Ovary (tissue), 10 donors: ENCODE measurements at regions of chr11 and their contacts with region 1.

Region 1: GRCh38 chr11:105802390-105802789 is 192.5 kb downstream of the GRIA4 start:
- DNase-seq: no peak
- H3K4me3 ChIP-seq: no peak overlapping the region
- H3K27ac ChIP-seq: no peak overlapping the region
- H3K4me1 ChIP-seq: no peaks in the 10 kb centered on the region
- H3K27me3 ChIP-seq: no peaks in the 10 kb centered on the region
- CTCF ChIP-seq: no peak
- EP300 ChIP-seq: no peak
- POLR2A ChIP-seq: no peak

Region 2: DNA sequence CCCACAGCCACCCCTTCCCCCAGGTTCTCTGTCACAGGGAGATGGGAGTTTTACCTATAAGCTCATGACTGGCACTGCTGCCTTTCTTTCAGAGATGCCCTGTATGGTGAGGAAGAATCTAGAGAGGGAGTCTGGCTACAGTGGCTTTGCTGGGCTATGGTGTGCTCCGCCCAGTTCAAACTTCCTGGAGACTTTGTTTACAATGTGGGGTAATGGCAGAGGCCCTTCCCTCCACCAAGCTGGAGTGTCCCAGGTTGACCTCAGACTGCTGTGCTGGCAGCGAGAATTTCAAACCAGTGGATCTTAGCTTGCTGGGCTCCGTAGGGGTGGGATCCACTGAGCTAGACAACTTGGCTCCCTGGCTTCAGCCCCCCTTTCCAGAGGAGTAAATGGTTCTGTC is 76.1 kb after region 1 on chr11:
- intact Hi-C with region 1: loop called in 1 of 4 experiments (anchors 2 kb)
- DNase-seq: no peak
- H3K4me3 ChIP-seq: no peak overlapping the region
- H3K27ac ChIP-seq: no peak overlapping the region
- H3K4me1 ChIP-seq: no peaks in the 10 kb centered on the region
- H3K27me3 ChIP-seq: no peaks in the 10 kb centered on the region
- CTCF ChIP-seq: no peak
- EP300 ChIP-seq: no peak
- POLR2A ChIP-seq: no peak